ENCODE measurements at regions of chr7 and their contacts with region 1.

Region 1: GRCh38 chr7:7424151-7424873 is 111.4 kb downstream of the COL28A1 start:
- DNase-seq: peak; percentile 59 to 76
- ATAC-seq: peak; percentile 82
- H3K4me3 ChIP-seq: peak overlapping the region; percentile 92 to 98
- H3K27ac ChIP-seq: no peak overlapping the region
- H3K4me1 ChIP-seq: no peaks in the 10 kb centered on the region
- H3K27me3 ChIP-seq: no peaks in the 10 kb centered on the region

Region 2: DNA sequence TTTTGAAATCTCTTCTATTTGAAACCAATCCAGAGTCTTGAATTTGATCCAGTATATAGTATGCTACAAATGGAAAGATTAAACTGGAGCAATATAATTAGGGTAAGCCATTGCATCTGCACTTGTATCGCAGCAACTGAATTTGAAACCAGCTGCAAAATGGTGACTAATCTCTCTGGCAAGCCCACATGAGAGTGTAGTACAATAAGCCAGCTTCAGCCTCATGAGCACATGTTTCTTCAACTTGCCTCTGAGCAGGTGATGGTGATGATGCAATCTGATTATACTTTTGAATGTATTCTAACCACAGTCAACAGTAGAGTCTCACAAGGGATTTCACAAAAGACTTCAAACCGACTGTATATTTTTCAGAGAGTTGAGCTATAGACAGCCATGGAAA is 294.9 kb after region 1 on chr7:
- intact Hi-C with region 1: no loop called
- DNase-seq: no peak
- ATAC-seq: peak; percentile 19
- H3K4me3 ChIP-seq: no peak overlapping the region
- H3K27ac ChIP-seq: no peak overlapping the region
- H3K4me1 ChIP-seq: no peaks in the 10 kb centered on the region
- H3K27me3 ChIP-seq: no peaks in the 10 kb centered on the region

Region 3: GRCh38 chr7:8190119-8190895 is 766.0 kb after region 1 on chr7:
- intact Hi-C with region 1: loop called in 1 of 2 experiments (anchors 5 kb)
- DNase-seq: peak in 1 of 2 donors; percentile 51
- ATAC-seq: peak; percentile 72
- H3K4me3 ChIP-seq: no peak overlapping the region
- H3K27ac ChIP-seq: no peak overlapping the region
- H3K4me1 ChIP-seq: no peaks in the 10 kb centered on the region
- H3K27me3 ChIP-seq: no peaks in the 10 kb centered on the region

Region 4: DNA sequence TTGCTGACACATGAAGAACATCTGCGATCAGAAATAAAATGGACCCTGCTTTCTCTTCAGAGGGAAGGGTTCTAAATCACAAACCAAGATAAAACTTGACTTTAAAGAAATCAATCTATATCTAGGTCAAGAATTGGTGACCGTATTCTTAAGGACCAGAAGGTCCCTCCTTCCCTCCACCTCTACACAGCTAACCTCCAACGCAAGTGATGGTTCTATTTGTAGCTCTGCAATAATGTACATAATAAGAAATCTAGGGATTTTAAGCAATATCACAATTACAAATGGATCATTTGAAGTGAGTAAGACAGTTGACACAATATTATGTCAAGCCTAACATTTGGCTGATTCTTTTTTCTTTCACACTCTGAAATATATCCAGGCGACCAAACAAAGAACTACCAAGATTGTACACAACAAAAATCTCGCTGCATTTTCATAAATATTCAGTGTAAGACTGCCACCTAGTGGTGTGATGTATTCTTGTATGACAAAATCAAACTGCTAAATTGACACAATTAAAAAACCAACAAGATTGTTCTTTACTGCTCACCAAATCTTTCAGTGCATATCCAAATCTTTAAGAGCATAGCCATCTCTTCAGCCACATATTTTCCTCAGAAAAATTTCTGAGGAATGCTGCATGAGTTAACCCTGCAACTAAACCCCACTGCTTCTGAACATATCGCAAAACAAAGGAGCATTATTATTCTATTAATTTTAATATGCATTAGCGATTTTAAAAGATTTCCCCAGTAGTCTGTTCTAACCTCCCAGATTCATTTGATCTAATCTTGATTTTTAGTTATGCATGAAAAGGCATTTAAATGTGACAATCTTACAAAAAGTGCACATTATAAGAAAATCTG is 793.1 kb after region 1 on chr7:
- intact Hi-C with region 1: loop called (anchors 5 to 10 kb)
- DNase-seq: no peak
- ATAC-seq: peak; percentile 78
- H3K4me3 ChIP-seq: no peak overlapping the region
- H3K27ac ChIP-seq: no peak overlapping the region
- H3K4me1 ChIP-seq: no peaks in the 10 kb centered on the region
- H3K27me3 ChIP-seq: no peaks in the 10 kb centered on the region

Region 5: DNA sequence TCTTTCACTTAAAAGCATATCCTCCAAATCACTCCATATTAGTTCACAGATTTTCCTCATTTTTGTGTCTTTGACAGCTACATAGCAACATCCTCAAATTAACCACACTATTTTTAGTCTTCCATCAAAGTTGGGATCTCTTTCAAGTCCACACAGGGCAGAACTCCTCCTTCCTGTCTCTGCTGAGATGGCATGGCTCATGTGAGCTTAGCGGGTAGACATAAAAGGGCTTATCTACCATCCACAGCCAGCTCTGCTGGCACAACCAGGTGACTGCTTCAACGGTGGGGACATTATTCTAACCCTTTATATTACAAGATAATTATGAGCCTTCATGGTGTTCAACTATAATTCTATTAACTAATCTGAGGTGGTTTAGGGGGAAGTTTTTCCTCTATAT is 802.2 kb after region 1 on chr7:
- intact Hi-C with region 1: loop called in 1 of 2 experiments (anchors 10 kb)
- DNase-seq: no peak
- ATAC-seq: no peak
- H3K4me3 ChIP-seq: no peak overlapping the region
- H3K27ac ChIP-seq: no peak overlapping the region
- H3K4me1 ChIP-seq: no peaks in the 10 kb centered on the region
- H3K27me3 ChIP-seq: no peaks in the 10 kb centered on the region